ENCODE measurements at regions of chr10 and their contacts with region 1.

Region 1: GRCh38 chr10:47381427-47382379 is 2.4 kb downstream of the ZNF488 start:
- DNase-seq: no peak

Region 2: GRCh38 chr10:46284293-46285229 is 1097.1 kb before region 1 on chr10:
- CTCF ChIA-PET with region 1: no interaction called
- POLR2A ChIA-PET with region 1: interaction called, 18 read pairs
- DNase-seq: peak; percentile 83

Region 3: DNA sequence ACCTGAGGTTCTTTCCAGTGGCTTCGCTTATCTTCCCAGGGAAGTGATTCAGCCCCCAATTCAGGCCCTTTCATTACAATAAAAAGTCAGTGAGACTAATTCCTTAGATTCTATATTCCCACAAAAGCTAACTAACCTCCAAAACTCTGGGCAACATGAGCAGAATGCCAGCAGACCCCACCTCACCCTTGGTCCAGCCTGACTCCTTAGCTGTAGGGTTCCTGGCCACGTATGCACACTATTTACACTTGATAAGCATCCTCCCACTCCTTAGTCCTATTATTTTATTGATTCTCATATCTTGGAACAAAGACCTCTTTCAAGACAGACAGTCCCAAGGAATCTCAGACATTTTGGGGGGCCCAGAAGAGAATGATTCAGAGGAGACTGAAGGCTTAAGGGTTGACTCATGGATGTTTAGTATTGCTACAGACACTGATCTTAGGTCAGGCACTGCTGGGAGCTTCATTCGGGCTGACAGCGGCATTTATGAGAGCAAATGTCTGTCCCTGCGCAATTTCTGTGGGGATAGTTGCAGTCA is 244.3 kb before region 1 on chr10:
- CTCF ChIA-PET with region 1: no interaction called
- POLR2A ChIA-PET with region 1: no interaction called
- DNase-seq: no peak

Region 4: DNA sequence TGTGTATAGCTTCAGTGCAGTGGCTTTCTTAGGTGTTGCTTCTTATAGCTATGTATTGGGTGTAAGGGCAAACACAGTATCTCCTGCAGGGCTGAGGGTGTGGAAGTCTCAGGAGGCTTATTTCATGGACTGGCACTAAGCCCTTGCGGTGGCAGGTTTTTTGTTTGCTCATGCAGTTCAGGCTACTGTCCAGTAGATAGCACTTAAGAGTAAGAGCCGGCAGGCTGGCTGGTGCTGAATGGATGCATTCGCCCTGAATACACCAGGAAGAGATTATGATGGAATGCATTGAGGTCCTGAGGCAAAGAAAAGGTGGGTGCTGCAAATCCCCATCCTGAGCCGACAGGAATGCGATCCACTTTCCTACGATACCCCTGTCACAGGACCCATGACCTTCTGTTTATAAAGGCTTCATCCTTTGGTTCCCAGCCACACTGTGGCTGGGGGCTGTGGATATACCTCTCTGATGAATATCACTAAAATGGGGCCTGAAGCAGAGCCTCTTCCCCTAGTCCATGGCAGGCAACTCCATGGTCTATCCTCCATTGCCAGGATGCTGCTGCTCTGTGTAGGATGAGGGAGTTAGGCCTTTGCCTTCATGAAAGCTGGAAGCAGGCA is 57.3 kb after region 1 on chr10:
- CTCF ChIA-PET with region 1: no interaction called
- POLR2A ChIA-PET with region 1: no interaction called
- DNase-seq: peak; percentile 61